Gastrocnemius medialis (tissue), 4 donors: ENCODE measurements at regions of chr7 and their contacts with region 1.

Region 1: GRCh38 chr7:135211179-135211945 is at the start of gene WDR91:
- DNase-seq: peak; percentile 91 to 95
- ATAC-seq: peak; percentile 88 to 91
- H3K4me3 ChIP-seq: peak within 1 kb of the TSS; percentile 68 to 84 (median 80)
- H3K27ac ChIP-seq: peak within 1 kb of the TSS; percentile 86 to 95 (median 90)
- H3K4me1 ChIP-seq: peaks cover 11 to 22% of the 10 kb centered on the region in 2 donors
- H3K27me3 ChIP-seq: no peaks in the 10 kb centered on the region
- CTCF ChIP-seq: no peak
- POLR2A ChIP-seq: peak; percentile 70 to 81
- total RNA-seq, gene WDR91: 3.6 to 8.0 (median 6.4) TPM

Region 2: GRCh38 chr7:134646425-134647305 is 564.7 kb before region 1 on chr7 and contains the start of gene BPGM:
- in situ Hi-C with region 1: no loop called
- intact Hi-C with region 1: loop called (anchors 1 kb)
- DNase-seq: peak; percentile 98 to 99
- ATAC-seq: peak; percentile 100
- H3K4me3 ChIP-seq: peak within 1 kb of the TSS; percentile 61 to 85 (median 76)
- H3K27ac ChIP-seq: peak within 1 kb of the TSS; percentile 81 to 89 (median 85)
- H3K4me1 ChIP-seq: peaks cover 17 to 20% of the 10 kb centered on the region in 2 donors
- H3K27me3 ChIP-seq: no peaks in the 10 kb centered on the region
- CTCF ChIP-seq: peak in 1 of 5 experiments; percentile 10
- POLR2A ChIP-seq: peak; percentile 89 to 98
- total RNA-seq, gene BPGM: 11.3 to 24.5 (median 13.6) TPM

Region 3: GRCh38 chr7:134986363-134987251 is 224.8 kb before region 1 on chr7 and contains the start of gene AGBL3:
- in situ Hi-C with region 1: loop called in 1 of 4 experiments (anchors 10 kb)
- intact Hi-C with region 1: loop called (anchors 1 kb)
- DNase-seq: peak; percentile 83 to 93
- ATAC-seq: peak; percentile 96 to 99
- H3K4me3 ChIP-seq: peak within 1 kb of the TSS; percentile 75 to 92 (median 78)
- H3K27ac ChIP-seq: peak within 1 kb of the TSS; percentile 87 to 91 (median 87)
- H3K4me1 ChIP-seq: peaks cover 11 to 17% of the 10 kb centered on the region in 2 donors
- H3K27me3 ChIP-seq: no peaks in the 10 kb centered on the region
- CTCF ChIP-seq: peak; percentile 51 to 73 (median 66)
- POLR2A ChIP-seq: peak in 1 of 2 donors; percentile 60
- total RNA-seq, gene AGBL3: 0.61 to 1.9 (median 1.0) TPM

Region 4: DNA sequence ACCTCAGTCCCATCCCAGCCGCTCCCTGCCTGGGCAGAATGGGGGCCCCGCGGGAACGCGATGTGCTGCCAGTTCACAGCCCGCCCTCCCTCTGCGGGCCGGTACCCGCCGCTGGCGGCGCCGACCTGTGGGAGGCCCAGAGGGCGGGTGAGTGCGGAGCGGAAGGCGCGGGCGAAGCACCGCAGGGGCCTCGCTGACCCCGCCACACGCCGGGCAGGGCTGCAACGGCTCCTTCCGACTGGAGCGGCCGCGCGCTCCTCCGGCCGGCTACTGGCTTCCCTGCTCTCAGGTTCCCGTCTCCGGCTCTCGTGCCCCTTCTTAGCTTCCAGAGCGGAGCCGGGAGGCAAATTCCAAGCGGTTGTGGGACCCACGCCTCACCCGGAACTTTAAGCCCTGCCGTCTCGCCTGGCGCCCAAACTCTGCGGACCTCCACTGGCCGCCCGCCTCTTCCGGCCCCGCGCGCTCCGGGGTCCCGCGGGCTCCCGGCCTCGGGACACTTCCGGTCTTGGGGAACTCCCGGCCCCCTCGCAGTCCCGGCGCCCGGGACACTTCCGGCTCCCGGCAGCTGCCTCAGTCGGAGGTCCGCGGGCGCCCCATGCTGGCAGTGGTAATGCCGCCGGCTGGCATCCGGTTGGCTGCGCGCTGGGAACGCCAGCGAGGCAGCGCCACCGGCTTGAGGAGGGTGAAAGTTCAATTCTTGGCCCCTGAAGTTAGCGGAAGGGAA is 40.9 kb before region 1 on chr7 and contains the start of gene CYREN:
- in situ Hi-C with region 1: no loop called
- intact Hi-C with region 1: loop called (anchors 2 kb)
- DNase-seq: peak; percentile 90 to 95
- ATAC-seq: peak; percentile 63 to 74
- H3K4me3 ChIP-seq: peak within 1 kb of the TSS; percentile 63 to 85 (median 72)
- H3K27ac ChIP-seq: peak within 1 kb of the TSS; percentile 93 to 97 (median 96)
- H3K4me1 ChIP-seq: peaks cover 53 to 59% of the 10 kb centered on the region in 2 donors
- H3K27me3 ChIP-seq: no peaks in the 10 kb centered on the region
- CTCF ChIP-seq: peak; percentile 54 to 77 (median 66)
- POLR2A ChIP-seq: peak; percentile 81 to 89
- total RNA-seq, gene CYREN: 11.8 to 51.5 (median 20.4) TPM

Region 5: DNA sequence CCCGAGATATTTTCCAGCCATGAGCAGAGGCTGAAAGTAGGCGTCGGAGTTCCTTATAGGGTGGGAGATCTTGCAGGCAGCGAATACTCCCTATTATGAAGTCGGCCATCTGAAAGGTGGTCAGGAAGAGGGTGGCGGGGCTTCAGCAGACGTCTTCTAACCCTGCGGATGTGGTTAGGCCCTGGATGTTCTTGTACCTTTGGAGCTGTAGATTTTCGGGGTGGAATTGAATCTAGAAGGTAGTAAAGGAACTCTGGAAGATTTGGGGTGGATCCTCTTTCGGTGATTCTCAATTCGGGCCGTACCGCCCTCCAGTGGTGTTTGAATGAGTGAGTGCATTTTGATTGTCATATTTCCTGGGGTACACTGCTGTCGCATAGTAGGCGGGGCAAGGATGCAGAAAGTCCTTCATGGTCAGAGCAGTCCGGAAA is 347.0 kb after region 1 on chr7:
- in situ Hi-C with region 1: no loop called
- intact Hi-C with region 1: loop called (anchors 5 kb)
- DNase-seq: peak; percentile 6 to 20
- ATAC-seq: peak; percentile 32 to 51
- H3K4me3 ChIP-seq: peak overlapping the region; percentile 75 to 97 (median 86)
- H3K27ac ChIP-seq: peak overlapping the region; percentile 85 to 96 (median 94)
- H3K4me1 ChIP-seq: peaks cover 6 to 14% of the 10 kb centered on the region in 2 donors
- H3K27me3 ChIP-seq: no peaks in the 10 kb centered on the region
- CTCF ChIP-seq: peak in 3 of 5 experiments; percentile 38 to 48 (median 44)
- POLR2A ChIP-seq: no peak